ENCODE measurements at regions of chr2 and their contacts with region 1.

Region 1: GRCh38 chr2:58046585-58047372 is at the start of gene VRK2:
- DNase-seq: peak; percentile 87
- ATAC-seq: peak; percentile 83
- H3K4me3 ChIP-seq: peak within 1 kb of the TSS; percentile 69
- H3K27ac ChIP-seq: peak within 1 kb of the TSS; percentile 92
- H3K4me1 ChIP-seq: peaks cover 15% of the 10 kb centered on the region; the same call in 1 of the 2 replicates
- H3K27me3 ChIP-seq: no peaks in the 10 kb centered on the region
- CTCF ChIP-seq: 0 out of 6 replicates have a peak, but pooled peaks of 2 of the 3 experiments have one; percentile 3 to 4
- EP300 ChIP-seq: peak in 1 of 2 experiments; percentile 54; a peak in 2 of 4 replicates
- POLR2A ChIP-seq: peak; percentile 92
- RAD21 ChIP-seq: peak; percentile 26; the same call in 1 of the 2 replicates
- polyA plus RNA-seq, gene VRK2: 26.5 to 32.1 TPM

Region 2: GRCh38 chr2:57881998-57882884 is 164.5 kb before region 1 on chr2:
- CTCF ChIA-PET with region 1: interaction called, 3 read pairs
- POLR2A ChIA-PET with region 1: interaction called, 23 read pairs
- RAD21 ChIA-PET with region 1: interaction called, 10 read pairs
- SMC1A ChIA-PET with region 1: no interaction called
- in situ Hi-C with region 1: no loop called
- intact Hi-C with region 1: loop called (anchors 2 kb)
- DNase-seq: no peak
- ATAC-seq: peak; percentile 11
- H3K4me3 ChIP-seq: peak overlapping the region; percentile 47; the same call in 1 of the 2 replicates
- H3K27ac ChIP-seq: peak overlapping the region; percentile 74
- H3K4me1 ChIP-seq: peaks cover 39% of the 10 kb centered on the region
- H3K27me3 ChIP-seq: no peaks in the 10 kb centered on the region
- CTCF ChIP-seq: no peak
- EP300 ChIP-seq: no peak
- POLR2A ChIP-seq: no peak
- RAD21 ChIP-seq: no peak

Region 3: DNA sequence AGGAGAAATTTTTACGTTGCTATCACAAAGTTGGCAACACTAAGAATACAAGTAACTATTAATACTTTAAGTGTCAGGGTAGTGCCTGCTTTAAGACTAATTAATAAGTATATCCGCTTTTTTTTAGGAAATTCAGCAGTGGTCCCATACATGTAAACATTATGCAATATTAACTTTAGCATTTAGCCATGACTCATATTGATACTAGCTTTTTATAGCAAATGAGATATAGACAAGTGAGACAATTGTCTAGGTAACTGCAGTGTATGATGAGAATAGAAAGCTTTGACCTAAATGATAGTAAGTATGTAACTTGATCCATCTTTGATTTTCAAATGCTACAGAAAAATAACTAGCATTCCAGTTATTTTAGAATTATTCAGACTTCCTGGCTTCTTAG is 27.6 kb before region 1 on chr2:
- CTCF ChIA-PET with region 1: interaction called, 3 read pairs
- POLR2A ChIA-PET with region 1: interaction called, 7 read pairs
- RAD21 ChIA-PET with region 1: interaction called, 11 read pairs
- SMC1A ChIA-PET with region 1: interaction called, 83 read pairs
- in situ Hi-C with region 1: no loop called
- intact Hi-C with region 1: loop called (anchors 2 kb)
- DNase-seq: no peak
- ATAC-seq: peak; percentile 81
- H3K4me3 ChIP-seq: no peak overlapping the region
- H3K27ac ChIP-seq: no peak overlapping the region
- H3K4me1 ChIP-seq: peaks cover 12% of the 10 kb centered on the region; the same call in 1 of the 2 replicates
- H3K27me3 ChIP-seq: no peaks in the 10 kb centered on the region
- CTCF ChIP-seq: no peak
- EP300 ChIP-seq: peak; percentile 56
- POLR2A ChIP-seq: no peak
- RAD21 ChIP-seq: no peak

Region 4: GRCh38 chr2:58025150-58025933 is 21.4 kb before region 1 on chr2:
- CTCF ChIA-PET with region 1: interaction called, 3 read pairs
- POLR2A ChIA-PET with region 1: interaction called, 7 read pairs
- RAD21 ChIA-PET with region 1: interaction called, 30 read pairs
- SMC1A ChIA-PET with region 1: interaction called, 83 read pairs
- in situ Hi-C with region 1: no loop called
- intact Hi-C with region 1: loop called (anchors 2 kb)
- DNase-seq: no peak
- ATAC-seq: peak; percentile 54
- H3K4me3 ChIP-seq: no peak overlapping the region
- H3K27ac ChIP-seq: no peak overlapping the region
- H3K4me1 ChIP-seq: peaks cover 14% of the 10 kb centered on the region
- H3K27me3 ChIP-seq: no peaks in the 10 kb centered on the region
- CTCF ChIP-seq: no peak
- EP300 ChIP-seq: no peak
- POLR2A ChIP-seq: no peak
- RAD21 ChIP-seq: no peak

Region 5: DNA sequence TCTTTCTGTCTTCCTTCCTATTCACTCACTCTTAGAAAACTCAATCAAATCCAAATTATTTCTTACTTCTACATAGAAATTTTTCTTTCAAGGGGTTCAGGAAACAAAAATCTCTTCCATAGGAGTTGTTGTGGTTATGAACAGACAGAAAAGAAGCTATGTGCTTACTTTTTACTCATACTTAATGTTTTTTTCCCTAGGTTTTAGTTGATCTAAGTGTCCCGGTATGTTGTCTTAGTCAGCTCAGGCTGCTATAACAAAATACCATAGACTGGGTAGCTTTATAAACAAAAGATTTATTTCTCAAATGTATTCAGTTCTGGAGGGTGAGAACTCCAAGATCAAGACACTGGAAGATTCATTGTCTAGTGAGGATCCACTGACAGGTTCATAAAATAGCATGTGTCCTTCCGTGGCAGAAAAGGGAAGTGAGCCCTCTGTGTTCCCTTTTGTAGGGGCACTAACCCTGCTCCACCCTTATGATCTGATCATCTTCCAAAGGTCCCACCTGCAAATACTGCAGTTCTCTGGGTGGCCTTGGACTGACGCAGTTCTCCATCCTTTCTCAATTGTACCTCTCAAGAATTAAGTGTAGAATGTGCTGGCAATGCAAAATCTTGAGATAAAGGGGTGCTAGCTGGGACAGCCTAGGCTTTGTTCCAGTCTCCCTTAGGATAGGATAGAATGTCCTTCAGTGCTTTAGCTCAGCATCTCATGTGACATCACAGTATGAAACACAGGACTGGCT is 14.6 kb before region 1 on chr2:
- CTCF ChIA-PET with region 1: interaction called, 4 read pairs
- POLR2A ChIA-PET with region 1: interaction called, 9 read pairs
- RAD21 ChIA-PET with region 1: interaction called, 30 read pairs
- SMC1A ChIA-PET with region 1: interaction called, 11 read pairs
- in situ Hi-C with region 1: no loop called
- intact Hi-C with region 1: no loop called
- DNase-seq: no peak
- ATAC-seq: peak; percentile 83
- H3K4me3 ChIP-seq: 0 out of 2 replicates have a peak overlapping the region, but pooled peaks have one; percentile 1
- H3K27ac ChIP-seq: peak overlapping the region; percentile 39
- H3K4me1 ChIP-seq: peaks cover 40% of the 10 kb centered on the region
- H3K27me3 ChIP-seq: no peaks in the 10 kb centered on the region
- CTCF ChIP-seq: no peak
- EP300 ChIP-seq: no peak
- POLR2A ChIP-seq: no peak
- RAD21 ChIP-seq: no peak

Region 6: DNA sequence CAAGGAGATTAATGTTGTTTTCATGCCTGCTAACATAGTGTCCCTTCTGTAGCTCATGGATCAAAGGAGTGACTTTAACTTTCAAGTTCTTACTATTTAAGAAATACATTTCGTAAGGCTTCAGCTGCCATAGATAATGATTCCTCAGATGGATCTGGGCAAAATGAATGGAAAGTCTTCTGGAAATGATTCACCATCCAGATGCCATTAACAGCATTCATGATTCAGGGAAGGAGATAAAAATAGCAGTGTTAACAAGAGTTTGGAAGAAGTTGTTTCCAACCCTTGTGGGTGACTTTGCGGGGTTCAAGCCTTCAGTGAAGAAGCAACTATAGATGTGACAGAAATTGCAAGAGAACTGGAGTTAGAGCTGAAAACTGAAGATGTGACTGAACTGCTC is 16.9 kb after region 1 on chr2:
- CTCF ChIA-PET with region 1: interaction called, 4 read pairs
- POLR2A ChIA-PET with region 1: interaction called, 14 read pairs
- RAD21 ChIA-PET with region 1: interaction called, 13 read pairs
- SMC1A ChIA-PET with region 1: interaction called, 61 read pairs
- in situ Hi-C with region 1: no loop called
- intact Hi-C with region 1: no loop called
- DNase-seq: no peak
- ATAC-seq: peak; percentile 9
- H3K4me3 ChIP-seq: no peak overlapping the region
- H3K27ac ChIP-seq: peak overlapping the region; percentile 59
- H3K4me1 ChIP-seq: peaks cover 14% of the 10 kb centered on the region
- H3K27me3 ChIP-seq: no peaks in the 10 kb centered on the region
- CTCF ChIP-seq: no peak
- EP300 ChIP-seq: no peak
- POLR2A ChIP-seq: no peak
- RAD21 ChIP-seq: no peak

Region 7: DNA sequence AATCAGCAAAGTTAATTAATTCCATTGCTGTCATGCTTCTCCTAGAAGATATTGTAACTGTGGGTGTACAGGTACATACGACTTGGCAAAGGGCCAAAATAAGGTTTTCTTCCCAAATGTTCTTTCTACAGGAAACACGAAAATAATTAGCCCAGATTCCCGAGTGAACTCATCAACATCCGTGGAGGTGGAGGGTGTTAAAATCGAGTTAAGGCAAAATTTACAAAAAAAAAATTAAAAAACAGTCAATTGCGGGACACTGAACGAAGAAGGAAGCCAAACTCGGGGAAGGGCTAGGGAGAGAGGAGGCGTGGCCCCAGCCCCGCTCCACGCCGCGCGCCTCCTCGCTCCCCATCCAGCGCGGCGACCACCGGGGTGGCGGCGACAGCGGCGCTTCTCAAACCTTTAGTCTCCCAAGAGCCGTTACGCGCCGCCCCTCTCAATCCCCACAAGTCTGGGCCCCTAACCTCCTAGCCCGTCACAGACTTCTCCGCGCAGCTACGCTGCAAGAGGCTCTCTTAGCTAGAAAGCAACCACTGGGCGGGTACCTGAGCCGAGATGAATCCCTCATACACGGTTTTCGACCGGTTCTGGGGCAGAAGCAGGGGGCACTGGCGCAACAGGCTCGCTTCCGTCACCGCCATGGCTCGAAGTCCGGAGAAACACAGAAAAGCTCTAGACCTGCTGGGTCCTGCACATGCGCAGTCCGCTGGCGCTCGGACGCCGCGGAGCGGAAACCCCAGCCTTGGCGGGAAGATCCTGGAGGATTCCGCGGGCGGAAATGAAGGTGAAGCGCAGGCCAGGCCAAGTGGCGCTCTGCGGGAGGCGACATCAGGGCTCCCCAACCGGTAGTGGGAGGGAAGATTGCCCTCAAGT is 194.1 kb after region 1 on chr2 and contains the start of gene FANCL:
- CTCF ChIA-PET with region 1: no interaction called
- POLR2A ChIA-PET with region 1: interaction called, 5 read pairs
- RAD21 ChIA-PET with region 1: interaction called, 5 read pairs
- SMC1A ChIA-PET with region 1: interaction called, 6 read pairs
- in situ Hi-C with region 1: no loop called
- intact Hi-C with region 1: loop called (anchors 5 kb)
- DNase-seq: peak; percentile 69
- ATAC-seq: peak; percentile 64
- H3K4me3 ChIP-seq: peak within 1 kb of the TSS; percentile 90
- H3K27ac ChIP-seq: peak within 1 kb of the TSS; percentile 97
- H3K4me1 ChIP-seq: peaks cover 4% of the 10 kb centered on the region
- H3K27me3 ChIP-seq: no peaks in the 10 kb centered on the region
- CTCF ChIP-seq: no peak
- EP300 ChIP-seq: no peak
- POLR2A ChIP-seq: peak; percentile 95
- RAD21 ChIP-seq: no peak
- polyA plus RNA-seq, gene FANCL: 69.1 to 74.9 TPM

Region 8: GRCh38 chr2:58834404-58834803 is 787.6 kb after region 1 on chr2:
- CTCF ChIA-PET with region 1: no interaction called
- POLR2A ChIA-PET with region 1: no interaction called
- RAD21 ChIA-PET with region 1: no interaction called
- SMC1A ChIA-PET with region 1: no interaction called
- in situ Hi-C with region 1: no loop called
- intact Hi-C with region 1: no loop called
- DNase-seq: no peak
- ATAC-seq: no peak
- H3K4me3 ChIP-seq: no peak overlapping the region
- H3K27ac ChIP-seq: no peak overlapping the region
- H3K4me1 ChIP-seq: no peaks in the 10 kb centered on the region
- H3K27me3 ChIP-seq: no peaks in the 10 kb centered on the region
- CTCF ChIP-seq: no peak
- EP300 ChIP-seq: no peak
- POLR2A ChIP-seq: no peak
- RAD21 ChIP-seq: no peak

Measured in GM12878 (cell line).